Heart right ventricle (tissue), 16 donors: ENCODE measurements at regions of chr1 and their contacts with region 1.

Region 1: DNA sequence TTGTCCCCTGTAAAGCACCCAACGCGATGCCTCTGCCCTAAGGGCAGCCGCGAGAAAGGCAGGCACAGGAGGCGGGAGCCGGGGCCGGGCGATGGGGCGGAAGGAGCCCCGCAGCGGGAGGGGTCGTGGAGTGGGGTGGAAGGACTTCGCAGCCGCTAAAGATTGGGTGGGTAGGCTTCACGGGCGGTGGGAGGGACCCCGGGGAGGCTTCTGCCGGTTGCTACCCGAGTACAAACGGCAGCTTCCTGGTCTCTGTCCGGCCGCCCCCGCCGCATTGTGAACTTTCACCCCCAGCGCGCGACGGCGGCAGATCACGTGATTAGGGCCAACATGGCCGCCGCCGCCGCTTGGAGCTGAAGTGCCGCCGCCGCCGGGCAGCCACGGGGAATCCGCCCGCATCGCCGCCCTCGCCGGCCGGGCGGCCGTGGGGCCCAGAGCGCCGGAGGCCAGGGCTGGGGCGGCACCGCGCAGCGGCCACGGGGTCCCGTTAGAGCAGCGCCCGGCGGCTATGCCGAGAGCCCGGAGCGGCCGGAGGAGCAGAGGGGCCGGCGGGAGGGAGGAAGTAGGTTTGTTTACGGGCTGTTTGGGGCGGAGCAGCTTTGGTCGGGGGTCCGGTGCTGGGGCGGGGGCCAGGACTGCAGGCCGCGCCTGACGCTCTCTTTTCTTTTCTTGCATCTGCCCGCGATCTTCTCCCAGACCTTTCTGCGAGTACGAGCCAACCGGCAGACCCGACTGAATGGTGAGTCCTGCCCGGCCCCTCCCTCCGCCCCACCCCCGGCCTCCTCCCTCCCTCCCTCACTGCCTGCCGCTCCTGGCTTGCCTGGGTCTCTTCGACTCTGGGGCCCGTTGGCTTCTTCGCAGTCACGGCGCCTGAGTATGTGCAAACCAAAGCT is 42.4 kb downstream of the TMEM53 start:
- DNase-seq: peak; percentile 92 to 93
- ATAC-seq: peak; percentile 82 to 94 (median 87)
- H3K4me3 ChIP-seq: peak overlapping the region; percentile 65 to 90 (median 86)
- H3K27ac ChIP-seq: peak overlapping the region; percentile 91 to 99 (median 97)
- H3K4me1 ChIP-seq: peaks cover 3 to 52% (median 34%) of the 10 kb centered on the region in 9 donors
- H3K27me3 ChIP-seq: no peaks in the 10 kb centered on the region
- CTCF ChIP-seq: no peak

Region 2: DNA sequence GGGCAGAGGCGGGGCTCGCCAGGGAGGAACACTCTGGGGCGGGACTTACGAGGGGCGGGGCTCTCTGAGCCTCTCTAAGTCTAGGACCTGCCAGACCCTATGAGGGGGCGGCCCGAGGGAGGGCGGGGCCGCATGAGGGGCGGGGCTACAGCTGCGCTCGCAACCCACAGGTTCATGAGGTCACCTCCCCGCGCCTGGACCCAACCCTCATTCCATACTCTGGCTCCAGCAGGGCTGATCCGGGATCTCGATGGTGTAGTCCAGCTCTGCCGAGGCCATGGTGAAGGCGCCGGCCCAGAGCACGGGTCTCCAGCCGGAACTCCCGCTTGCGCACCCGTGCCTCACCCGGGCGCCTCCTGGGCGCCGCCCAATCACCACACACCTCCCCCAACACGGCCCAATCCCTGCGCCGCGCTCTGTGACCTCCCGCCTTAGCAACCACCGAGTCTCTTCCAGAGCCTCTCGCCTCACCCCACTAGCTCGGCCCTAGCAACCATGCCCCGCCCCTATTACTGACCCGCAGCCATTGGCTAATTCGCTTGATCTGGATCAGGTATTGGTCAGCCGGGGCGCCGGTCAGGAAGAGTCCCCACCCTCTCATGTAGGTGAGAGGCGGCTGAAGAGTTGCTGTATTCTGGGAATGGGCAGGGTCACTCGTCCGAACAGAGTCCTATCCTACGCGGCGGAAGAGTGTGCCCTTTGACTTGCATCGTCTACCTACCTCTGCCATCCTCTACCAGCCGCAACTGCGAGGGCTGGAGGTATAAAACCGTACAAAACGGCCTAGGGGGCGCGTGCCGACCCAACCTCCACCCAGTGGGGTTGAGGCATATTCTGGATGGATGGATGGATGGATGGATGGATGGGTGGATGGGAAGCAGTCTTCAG is 42.5 kb after region 1 on chr1 and contains the starts of genes ARMH1 and TMEM53:
- intact Hi-C with region 1: loop called in 1 of 10 experiments (anchors 5 kb)
- DNase-seq: peak; percentile 98 to 99
- ATAC-seq: peak; percentile 96 to 98 (median 98)
- H3K4me3 ChIP-seq: peak within 1 kb of the TSS; percentile 51 to 76 (median 62)
- H3K27ac ChIP-seq: peak within 1 kb of the TSS; percentile 76 to 96 (median 92)
- H3K4me1 ChIP-seq: peaks cover 4 to 70% (median 30%) of the 10 kb centered on the region in 9 donors
- H3K27me3 ChIP-seq: no peaks in the 10 kb centered on the region
- CTCF ChIP-seq: peak in 1 of 9 donors; percentile 12
- total RNA-seq, gene ARMH1: 0.62 to 3.3 (median 1.1) TPM in 5 of 10 donors, not detected in the others
- total RNA-seq, gene TMEM53: 6.6 to 18.6 (median 12.2) TPM